ENCODE measurements at regions of chr2 and their contacts with region 1.

Region 1: DNA sequence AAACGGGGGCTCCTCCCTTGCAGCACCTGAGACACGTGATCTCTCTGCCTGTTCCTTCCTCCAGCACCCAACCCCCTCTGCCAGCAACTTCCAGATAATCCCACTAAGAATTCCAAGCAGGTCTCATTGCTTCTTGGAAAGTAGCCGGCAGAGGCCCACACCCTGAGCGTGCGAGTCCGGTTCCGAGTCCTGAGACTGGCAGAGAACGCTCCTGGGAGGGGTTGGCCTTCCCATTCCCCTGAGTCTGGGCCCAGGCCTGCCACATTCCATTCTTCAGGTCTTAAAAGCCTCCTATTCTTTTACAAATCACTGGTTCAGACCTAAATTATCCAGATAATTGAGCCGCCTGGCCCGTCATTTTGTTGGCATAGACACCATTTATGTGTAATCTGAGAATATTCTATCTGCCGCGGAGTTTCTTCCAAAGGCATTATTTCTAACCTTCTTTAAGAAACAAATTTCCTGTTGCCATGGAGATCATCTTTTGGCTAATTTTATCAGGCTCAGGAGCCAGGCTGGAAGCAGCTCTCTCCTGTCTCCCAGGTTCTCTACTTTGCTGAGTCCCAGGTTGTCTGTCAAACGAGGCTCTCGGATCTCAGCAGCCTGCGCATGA is 165.4 kb downstream of the MYCN start:
- H3K4me3 ChIP-seq: no peak overlapping the region
- H3K27ac ChIP-seq: no peak overlapping the region
- H3K4me1 ChIP-seq: peaks cover 3% of the 10 kb centered on the region; the same call in 1 of the 2 replicates
- CTCF ChIP-seq: no peak

Region 2: DNA sequence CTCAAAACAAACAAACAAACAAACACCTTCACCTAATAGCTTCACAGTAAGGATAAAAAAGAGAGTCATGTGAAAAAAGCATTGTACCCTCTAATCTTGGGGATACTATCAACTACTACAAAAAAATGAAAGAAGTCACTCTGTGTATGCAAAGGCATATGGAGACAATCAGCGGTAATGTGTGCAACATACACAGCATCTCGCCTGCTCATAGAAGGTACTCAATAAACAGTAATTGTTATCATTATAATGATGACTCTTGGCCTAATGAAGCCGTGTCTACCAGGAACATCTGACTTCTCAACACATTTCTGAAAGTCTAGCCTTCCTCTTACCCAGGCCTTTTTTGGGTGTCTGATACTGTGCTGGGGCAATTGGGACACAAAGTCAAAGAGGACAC is 110.2 kb before region 1 on chr2:
- CTCF ChIA-PET with region 1: no interaction called
- POLR2A ChIA-PET with region 1: interaction called, 12 read pairs
- H3K4me3 ChIP-seq: no peak overlapping the region
- H3K27ac ChIP-seq: no peak overlapping the region
- H3K4me1 ChIP-seq: no peaks in the 10 kb centered on the region
- CTCF ChIP-seq: no peak

Measured in HEK293 (cell line).